Activated CD4-positive, alpha-beta memory T cell treated with anti-CD3 and anti-CD28 coated beads, Interleukin-2, amount 10 ng/mL, durations not matched to agents 7 days and 5 days (primary cell): ENCODE measurements at regions of chr6 and their contacts with region 1.

Region 1: DNA sequence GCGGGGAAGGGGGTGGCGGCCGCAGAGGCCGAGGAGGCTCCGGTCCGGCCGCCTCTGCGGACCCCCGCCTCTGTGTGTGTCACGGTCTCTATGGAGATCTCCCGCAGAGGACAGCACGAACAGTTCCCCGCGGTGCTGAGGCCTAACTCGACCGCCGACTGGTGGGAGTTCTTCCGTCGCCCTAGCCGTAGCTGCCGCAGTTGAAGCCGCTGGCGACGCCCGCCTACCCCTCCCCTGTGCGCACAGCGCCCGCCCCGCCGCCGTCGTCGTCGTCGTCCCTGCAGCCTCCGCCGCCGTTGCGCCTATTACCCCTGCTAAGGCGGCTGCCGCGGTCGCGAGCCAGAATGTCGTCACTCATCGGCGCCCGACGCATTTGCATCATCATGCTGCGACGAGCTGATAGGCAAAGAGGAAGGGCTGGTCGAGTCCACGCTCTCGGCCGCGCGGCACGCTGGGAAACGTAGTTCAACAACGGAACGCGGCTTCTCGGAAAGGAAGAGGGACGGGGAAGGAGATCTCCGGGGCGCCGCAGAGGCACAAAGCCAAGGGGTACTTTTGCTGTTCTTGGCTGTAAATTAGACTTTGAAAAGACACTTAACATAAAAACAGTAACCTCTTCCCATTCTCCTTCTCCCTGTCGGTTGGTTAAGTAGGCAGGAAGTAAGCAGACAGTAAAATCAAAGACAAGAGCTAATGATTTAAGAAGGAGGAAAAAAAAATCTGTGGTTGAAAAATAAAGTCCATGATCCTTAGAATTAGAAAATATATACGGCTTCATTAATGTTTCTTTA is at the start of gene NUP153:
- DNase-seq: peak; percentile 100
- H3K4me3 Mint-ChIP-seq: peak within 1 kb of the TSS; percentile 86
- H3K27ac Mint-ChIP-seq: peak within 1 kb of the TSS; percentile 97
- H3K4me1 Mint-ChIP-seq: peaks cover 32% of the 10 kb centered on the region
- H3K27me3 Mint-ChIP-seq: no peaks in the 10 kb centered on the region
- total RNA-seq, gene NUP153: 74.0 to 75.8 TPM

Region 2: GRCh38 chr6:17599885-17600526 is 106.8 kb before region 1 on chr6 and contains the start of gene FAM8A1:
- CTCF ChIA-PET with region 1: interaction called, 21 read pairs
- POLR2A ChIA-PET with region 1: interaction called, 73 read pairs
- DNase-seq: peak; percentile 97
- H3K4me3 Mint-ChIP-seq: peak within 1 kb of the TSS; percentile 83
- H3K27ac Mint-ChIP-seq: peak within 1 kb of the TSS; percentile 73
- H3K4me1 Mint-ChIP-seq: peaks cover 35% of the 10 kb centered on the region
- H3K27me3 Mint-ChIP-seq: peaks cover 2% of the 10 kb centered on the region
- total RNA-seq, gene FAM8A1: 14.1 to 14.3 TPM

Region 3: GRCh38 chr6:17633465-17634188 is 73.1 kb before region 1 on chr6:
- CTCF ChIA-PET with region 1: interaction called, 5 read pairs
- POLR2A ChIA-PET with region 1: interaction called, 11 read pairs
- DNase-seq: peak; percentile 48
- H3K4me3 Mint-ChIP-seq: peak overlapping the region; percentile 34
- H3K27ac Mint-ChIP-seq: peak overlapping the region; percentile 84
- H3K4me1 Mint-ChIP-seq: peaks cover 65% of the 10 kb centered on the region
- H3K27me3 Mint-ChIP-seq: no peaks in the 10 kb centered on the region

Region 4: GRCh38 chr6:17688481-17688880 is 18.3 kb before region 1 on chr6:
- CTCF ChIA-PET with region 1: interaction called, 27 read pairs
- POLR2A ChIA-PET with region 1: interaction called, 43 read pairs
- DNase-seq: no peak
- H3K4me3 Mint-ChIP-seq: no peak overlapping the region
- H3K27ac Mint-ChIP-seq: no peak overlapping the region
- H3K4me1 Mint-ChIP-seq: peaks cover 35% of the 10 kb centered on the region
- H3K27me3 Mint-ChIP-seq: no peaks in the 10 kb centered on the region